ENCODE measurements at regions of chr9 and their contacts with region 1.

Region 1: DNA sequence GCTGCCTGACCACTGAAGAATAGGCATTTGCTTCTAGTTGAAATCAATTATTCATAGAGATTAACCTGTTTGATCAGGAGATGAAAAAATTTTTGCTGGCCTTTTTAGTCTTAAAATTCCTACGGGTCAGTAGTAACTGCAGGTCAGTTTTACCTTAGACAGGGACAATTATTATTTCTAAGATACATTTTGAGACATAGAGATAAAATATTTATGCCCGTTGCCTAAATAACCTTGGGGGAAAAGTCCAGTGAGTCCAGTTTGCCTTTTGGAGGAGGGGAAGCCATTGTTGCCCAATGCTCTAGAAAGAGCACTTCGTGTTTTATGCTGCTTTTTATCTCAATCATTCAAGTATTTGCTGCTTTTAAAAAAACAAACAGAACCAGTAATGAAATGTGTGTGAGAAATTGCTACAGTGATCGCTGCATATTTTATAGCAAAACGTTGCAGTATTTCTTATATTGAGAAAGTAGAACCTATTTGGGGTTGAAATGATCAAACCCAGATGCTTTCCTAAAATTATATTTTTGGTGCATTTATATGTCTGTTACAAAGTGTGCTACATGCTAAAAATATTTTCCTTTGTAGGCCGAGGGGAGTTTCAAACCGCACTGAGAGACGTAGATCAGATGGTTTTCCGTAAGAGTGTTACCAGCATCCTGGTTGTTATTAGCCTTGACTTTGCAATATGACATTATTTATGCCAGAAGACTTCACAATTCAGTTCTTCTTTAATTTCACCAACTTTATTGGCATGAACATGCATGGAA is 266.8 kb downstream of the AOPEP start:
- DNase-seq: no peak
- ATAC-seq: no peak
- H3K4me3 ChIP-seq: no peak overlapping the region
- H3K27ac ChIP-seq: no peak overlapping the region
- H3K4me1 ChIP-seq: peaks cover 13% of the 10 kb centered on the region
- H3K27me3 ChIP-seq: no peaks in the 10 kb centered on the region
- CTCF ChIP-seq: no peak

Region 2: GRCh38 chr9:94952565-94953373 is 40.5 kb before region 1 on chr9:
- intact Hi-C with region 1: loop called (anchors 5 kb)
- DNase-seq: no peak
- ATAC-seq: no peak
- H3K4me3 ChIP-seq: no peak overlapping the region
- H3K27ac ChIP-seq: peak overlapping the region; percentile 79
- H3K4me1 ChIP-seq: peaks cover 52% of the 10 kb centered on the region
- H3K27me3 ChIP-seq: no peaks in the 10 kb centered on the region
- CTCF ChIP-seq: no peak

Region 3: DNA sequence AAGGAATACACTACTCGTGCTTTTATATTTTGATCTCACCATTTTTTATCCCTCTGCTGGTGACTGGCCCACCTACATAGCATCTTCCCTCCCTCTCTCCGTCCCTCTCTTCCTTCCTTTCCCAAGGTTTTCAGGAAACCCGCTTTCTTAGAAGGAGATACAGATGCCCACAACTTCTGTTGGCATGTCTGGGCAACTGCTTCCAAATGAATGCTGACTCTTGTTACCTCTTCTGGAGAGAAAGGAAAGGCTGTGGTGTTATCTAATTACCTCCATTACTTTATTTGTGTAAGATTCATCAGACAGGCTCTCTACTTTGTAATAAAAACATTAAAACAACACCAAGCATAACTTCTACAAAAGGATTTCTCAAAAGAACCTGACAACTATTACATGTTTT is 304.1 kb after region 1 on chr9:
- intact Hi-C with region 1: no loop called
- DNase-seq: no peak
- ATAC-seq: no peak
- H3K4me3 ChIP-seq: no peak overlapping the region
- H3K27ac ChIP-seq: no peak overlapping the region
- H3K4me1 ChIP-seq: no peaks in the 10 kb centered on the region
- H3K27me3 ChIP-seq: no peaks in the 10 kb centered on the region
- CTCF ChIP-seq: no peak

Measured in psoas muscle (tissue), 8 donors.